Sigmoid colon (tissue), 7 donors: ENCODE measurements at regions of chr9 and their contacts with region 1.

Region 1: GRCh38 chr9:119868694-119869093 is 499.5 kb upstream of the BRINP1 start:
- DNase-seq: peak; percentile 78
- H3K4me3 ChIP-seq: no peak overlapping the region
- H3K27ac ChIP-seq: peak overlapping the region; percentile 51 to 73 (median 71)
- H3K4me1 ChIP-seq: peaks cover 0 to 23% (median 15%) of the 10 kb centered on the region in 4 donors
- H3K27me3 ChIP-seq: no peaks in the 10 kb centered on the region
- CTCF ChIP-seq: no peak
- EP300 ChIP-seq: peak in 3 of 4 donors; percentile 11 to 95 (median 95)
- POLR2A ChIP-seq: no peak

Region 2: GRCh38 chr9:119802621-119803020 is 66.1 kb before region 1 on chr9:
- intact Hi-C with region 1: loop called (anchors 5 kb)
- DNase-seq: peak; percentile 85
- H3K4me3 ChIP-seq: no peak overlapping the region
- H3K27ac ChIP-seq: peak overlapping the region in 3 of 4 donors; percentile 45 to 66 (median 58)
- H3K4me1 ChIP-seq: peaks cover 0 to 17% (median 11%) of the 10 kb centered on the region in 4 donors
- H3K27me3 ChIP-seq: no peaks in the 10 kb centered on the region
- CTCF ChIP-seq: no peak
- EP300 ChIP-seq: peak in 3 of 4 donors; percentile 25 to 72 (median 37)
- POLR2A ChIP-seq: no peak